ENCODE measurements at regions of chrX and their contacts with region 1.

Region 1: GRCh38 chrX:129600981-129601424 is 53.8 kb downstream of the APLN start:
- DNase-seq: no peak
- ATAC-seq: peak in 3 of 4 donors; percentile 13 to 17 (median 16)
- H3K4me3 ChIP-seq: no peak overlapping the region
- H3K27ac ChIP-seq: peak overlapping the region in 1 of 12 donors; percentile 2
- H3K4me1 ChIP-seq: peaks cover 0 to 14% (median 5%) of the 10 kb centered on the region in 12 donors
- H3K27me3 ChIP-seq: no peaks in the 10 kb centered on the region
- CTCF ChIP-seq: peak; percentile 26 to 64 (median 47)
- POLR2A ChIP-seq: no peak

Region 2: GRCh38 chrX:128870361-128870760 is 730.6 kb before region 1 on chrX:
- intact Hi-C with region 1: no loop called
- DNase-seq: no peak
- ATAC-seq: no peak
- H3K4me3 ChIP-seq: no peak overlapping the region
- H3K27ac ChIP-seq: no peak overlapping the region
- H3K4me1 ChIP-seq: no peaks in the 10 kb centered on the region
- H3K27me3 ChIP-seq: no peaks in the 10 kb centered on the region
- CTCF ChIP-seq: no peak
- POLR2A ChIP-seq: no peak

Region 3: GRCh38 chrX:130055103-130055502 is 454.1 kb after region 1 on chrX:
- intact Hi-C with region 1: loop called in 8 of 10 experiments (anchors 1 to 10 kb)
- DNase-seq: peak in 1 of 5 donors; percentile 37
- ATAC-seq: peak in 3 of 4 donors; percentile 24 to 35 (median 32)
- H3K4me3 ChIP-seq: no peak overlapping the region
- H3K27ac ChIP-seq: no peak overlapping the region
- H3K4me1 ChIP-seq: peaks cover 0 to 6% (median 0%) of the 10 kb centered on the region in 12 donors
- H3K27me3 ChIP-seq: no peaks in the 10 kb centered on the region
- CTCF ChIP-seq: no peak
- POLR2A ChIP-seq: no peak

Region 4: DNA sequence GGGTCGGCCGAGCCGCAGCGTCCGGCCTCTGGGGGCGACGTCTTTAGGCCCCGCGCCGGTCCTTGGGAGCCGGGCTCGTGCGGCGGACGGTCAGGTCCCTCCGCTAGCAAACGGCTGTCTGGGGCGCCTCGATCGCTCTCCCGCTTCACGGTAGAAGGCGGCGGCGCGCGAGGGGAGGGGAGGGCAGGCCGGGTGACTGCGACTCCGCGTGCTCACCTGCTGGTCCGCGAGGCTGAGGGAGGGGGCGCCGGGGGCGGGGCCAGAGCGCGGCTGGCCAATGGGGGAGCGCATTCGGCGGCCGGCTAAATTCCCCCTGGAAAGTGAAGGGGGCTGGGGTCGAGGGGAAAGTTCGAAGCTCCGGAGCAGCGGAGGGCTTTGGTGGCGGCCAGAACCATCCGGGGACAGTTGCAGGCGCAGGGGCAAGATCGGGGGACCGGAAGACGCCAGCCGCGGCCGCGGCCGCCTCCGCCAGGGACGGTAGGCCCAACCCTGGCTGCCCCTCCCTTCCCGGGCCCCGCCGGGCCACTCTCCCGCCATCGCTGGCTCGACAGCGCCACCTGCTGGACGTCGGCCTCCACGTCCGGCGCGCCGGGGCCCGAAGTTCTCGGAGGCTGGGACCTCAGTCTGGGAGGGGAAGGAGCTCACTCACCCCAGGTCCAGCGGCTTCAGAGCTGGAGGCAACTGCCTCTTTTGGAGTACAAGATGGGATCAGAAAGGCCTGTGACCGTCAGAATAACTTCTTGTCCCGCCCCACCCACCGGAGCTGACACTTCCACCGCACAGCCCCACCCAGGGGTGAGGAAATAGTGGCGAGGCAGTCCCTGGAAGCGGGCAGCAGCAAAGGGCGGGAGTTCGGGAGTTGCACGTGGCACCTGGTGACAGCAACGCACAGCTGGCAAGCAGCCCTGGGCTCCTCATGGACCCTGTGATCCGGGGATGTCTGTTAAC is 459.4 kb after region 1 on chrX:
- intact Hi-C with region 1: loop called in 8 of 10 experiments (anchors 1 to 10 kb)
- DNase-seq: peak; percentile 74 to 92 (median 81)
- ATAC-seq: peak; percentile 81 to 94 (median 92)
- H3K4me3 ChIP-seq: peak overlapping the region; percentile 21 to 67 (median 55)
- H3K27ac ChIP-seq: peak overlapping the region in 11 of 12 donors; percentile 18 to 77 (median 43)
- H3K4me1 ChIP-seq: peaks cover 0 to 6% (median 0%) of the 10 kb centered on the region in 12 donors
- H3K27me3 ChIP-seq: no peaks in the 10 kb centered on the region
- CTCF ChIP-seq: peak; percentile 74 to 90 (median 80)
- POLR2A ChIP-seq: peak in 1 of 2 donors; percentile 9

Measured in heart left ventricle (tissue), 16 donors.